Mammary epithelial cell (primary cell): ENCODE measurements at regions of chr21 and their contacts with region 1.

Region 1: DNA sequence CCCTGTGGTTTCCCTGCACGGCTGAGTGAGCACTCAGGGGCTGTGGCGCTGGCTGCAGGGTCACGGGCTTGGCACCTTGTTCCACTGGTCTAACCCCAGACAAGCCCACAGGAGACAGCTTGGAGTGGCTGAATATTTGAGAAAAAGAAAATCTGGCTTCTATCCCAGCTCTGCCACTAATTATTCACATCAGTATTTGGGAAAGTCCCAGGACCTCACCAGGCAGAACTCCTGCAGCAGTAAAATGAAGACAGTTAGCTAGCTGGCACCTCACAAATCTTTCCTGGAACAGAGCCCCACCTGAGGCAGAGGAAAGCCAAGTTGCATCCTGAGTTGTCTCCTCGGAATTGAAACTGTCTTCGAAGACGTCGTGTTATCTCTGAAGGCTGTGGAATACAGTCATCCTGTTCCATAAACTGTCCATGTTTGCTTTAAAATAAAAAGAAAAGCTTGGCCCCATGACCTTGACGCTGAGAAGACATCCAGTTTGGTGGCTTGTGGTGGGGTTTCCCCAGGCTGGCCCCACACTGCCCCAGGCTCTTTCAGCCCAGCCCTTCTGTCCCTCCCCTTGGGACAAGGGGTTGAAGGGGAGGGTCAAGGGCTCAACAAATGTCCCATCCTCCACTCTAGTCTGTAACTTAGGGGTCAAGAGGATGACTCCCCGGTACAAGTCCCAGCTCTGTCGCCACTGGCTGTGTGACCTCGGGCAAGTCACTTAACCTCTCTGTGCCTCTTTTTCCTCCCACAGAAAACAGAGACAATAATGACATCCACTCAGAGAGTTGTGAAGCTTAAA is 93.8 kb upstream of the TMPRSS2 start:
- DNase-seq: peak; percentile 38
- H3K4me3 ChIP-seq: no peak overlapping the region
- H3K27ac ChIP-seq: no peak overlapping the region
- H3K4me1 ChIP-seq: no peaks in the 10 kb centered on the region
- H3K27me3 ChIP-seq: no peaks in the 10 kb centered on the region
- CTCF ChIP-seq: no peak

Region 2: DNA sequence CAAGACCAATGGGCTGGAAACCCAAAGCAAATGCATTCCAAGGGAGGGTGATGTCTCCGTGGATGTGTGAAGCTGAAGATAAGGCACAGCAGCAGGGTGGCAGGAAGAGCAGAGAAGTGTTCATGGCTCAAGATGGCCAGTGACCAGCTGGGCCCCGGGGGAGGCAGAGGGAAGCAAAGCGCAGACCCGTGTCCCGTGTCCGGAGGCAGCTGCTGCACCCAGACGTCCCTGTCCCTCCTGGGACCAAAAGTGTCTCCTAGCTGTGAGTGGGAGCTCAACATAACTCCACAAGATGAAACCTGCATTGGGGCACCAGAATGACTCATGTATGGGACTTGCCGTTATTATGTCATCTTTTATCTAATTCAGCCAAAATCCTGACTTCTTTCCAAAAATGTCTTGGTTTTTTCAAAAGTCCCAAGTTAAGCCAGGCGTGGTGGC is 46.8 kb after region 1 on chr21:
- CTCF ChIA-PET with region 1: no interaction called
- dilution Hi-C with region 1: no loop called
- in situ Hi-C with region 1: no loop called
- intact Hi-C with region 1: no loop called
- DNase-seq: peak; percentile 91
- H3K4me3 ChIP-seq: no peak overlapping the region
- H3K27ac ChIP-seq: peak overlapping the region; percentile 59
- H3K4me1 ChIP-seq: peaks cover 55% of the 10 kb centered on the region
- H3K27me3 ChIP-seq: no peaks in the 10 kb centered on the region
- CTCF ChIP-seq: no peak

Region 3: DNA sequence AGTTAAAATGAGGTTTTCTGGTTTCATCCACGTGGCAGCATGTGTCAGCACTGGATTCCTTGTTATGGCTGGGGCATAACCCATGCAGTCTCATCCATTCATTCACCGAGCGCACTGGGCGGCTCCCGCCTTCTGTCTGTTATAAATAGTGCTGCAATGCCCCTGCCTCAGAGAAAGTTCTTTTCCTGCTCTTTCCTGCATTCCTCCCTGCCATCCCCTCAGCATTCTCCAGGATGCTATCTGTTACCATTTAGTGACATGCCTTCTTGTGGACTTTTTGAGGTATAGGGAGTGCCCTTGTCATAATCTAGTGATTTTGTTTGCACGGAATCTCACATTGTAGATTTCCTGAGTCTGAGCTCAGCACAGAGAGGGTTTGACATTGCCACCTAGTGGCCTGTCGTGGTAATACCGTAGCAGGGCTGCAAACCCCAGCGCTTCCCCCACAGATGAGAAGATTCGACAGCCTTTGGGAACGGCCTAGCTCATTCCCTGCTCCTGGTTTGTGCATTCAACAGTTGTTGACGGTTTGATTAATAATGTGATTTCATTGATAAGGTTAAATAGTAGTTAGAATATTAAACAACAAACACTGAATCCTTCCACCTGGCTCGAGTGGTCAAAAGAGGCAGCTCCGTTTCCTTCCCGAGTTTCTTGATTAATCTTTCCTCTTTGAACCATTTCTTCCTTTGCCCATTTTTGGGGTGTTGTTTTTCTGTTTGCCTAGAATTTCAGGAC is 515.6 kb after region 1 on chr21:
- CTCF ChIA-PET with region 1: no interaction called
- dilution Hi-C with region 1: no loop called
- in situ Hi-C with region 1: loop called (anchors 10 to 25 kb)
- intact Hi-C with region 1: no loop called
- DNase-seq: peak; percentile 48
- H3K4me3 ChIP-seq: no peak overlapping the region
- H3K27ac ChIP-seq: no peak overlapping the region
- H3K4me1 ChIP-seq: peaks cover 13% of the 10 kb centered on the region
- H3K27me3 ChIP-seq: no peaks in the 10 kb centered on the region
- CTCF ChIP-seq: peak; percentile 91 to 94